Mammary epithelial cell (primary cell): ENCODE measurements at regions of chr2 and their contacts with region 1.

Region 1: GRCh38 chr2:39996653-39997080 is 217.6 kb upstream of the THUMPD2 start:
- DNase-seq: peak; percentile 96
- H3K4me3 ChIP-seq: no peak overlapping the region
- H3K27ac ChIP-seq: peak overlapping the region; percentile 47
- H3K4me1 ChIP-seq: peaks cover 37% of the 10 kb centered on the region
- H3K27me3 ChIP-seq: no peaks in the 10 kb centered on the region
- CTCF ChIP-seq: no peak

Region 2: DNA sequence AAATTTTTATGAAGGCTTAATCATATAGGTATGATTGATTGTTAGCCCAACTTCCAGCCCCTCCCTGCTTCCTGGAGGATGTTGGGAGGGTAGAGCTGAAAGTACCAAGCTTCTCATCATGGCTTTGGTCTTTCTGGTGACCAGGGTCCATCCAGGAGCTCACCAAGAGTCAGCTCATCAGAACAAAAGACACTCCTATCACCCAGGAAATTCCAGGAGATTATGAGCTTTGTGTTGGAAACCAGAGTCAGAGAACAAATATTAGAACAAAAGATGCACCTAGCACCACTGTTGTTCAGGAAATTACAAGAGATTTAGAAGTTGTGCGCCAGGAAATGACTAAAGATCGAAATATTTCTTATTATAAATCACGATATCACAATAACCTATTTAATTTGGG is 97.7 kb before region 1 on chr2:
- CTCF ChIA-PET with region 1: no interaction called
- dilution Hi-C with region 1: no loop called
- in situ Hi-C with region 1: no loop called
- intact Hi-C with region 1: no loop called
- DNase-seq: no peak
- H3K4me3 ChIP-seq: no peak overlapping the region
- H3K27ac ChIP-seq: no peak overlapping the region
- H3K4me1 ChIP-seq: no peaks in the 10 kb centered on the region
- H3K27me3 ChIP-seq: no peaks in the 10 kb centered on the region
- CTCF ChIP-seq: no peak

Region 3: GRCh38 chr2:39932198-39932597 is 64.5 kb before region 1 on chr2:
- CTCF ChIA-PET with region 1: no interaction called
- dilution Hi-C with region 1: no loop called
- in situ Hi-C with region 1: no loop called
- intact Hi-C with region 1: loop called (anchors 5 kb)
- DNase-seq: peak; percentile 15
- H3K4me3 ChIP-seq: no peak overlapping the region
- H3K27ac ChIP-seq: no peak overlapping the region
- H3K4me1 ChIP-seq: peaks cover 3% of the 10 kb centered on the region
- H3K27me3 ChIP-seq: no peaks in the 10 kb centered on the region
- CTCF ChIP-seq: no peak

Region 4: DNA sequence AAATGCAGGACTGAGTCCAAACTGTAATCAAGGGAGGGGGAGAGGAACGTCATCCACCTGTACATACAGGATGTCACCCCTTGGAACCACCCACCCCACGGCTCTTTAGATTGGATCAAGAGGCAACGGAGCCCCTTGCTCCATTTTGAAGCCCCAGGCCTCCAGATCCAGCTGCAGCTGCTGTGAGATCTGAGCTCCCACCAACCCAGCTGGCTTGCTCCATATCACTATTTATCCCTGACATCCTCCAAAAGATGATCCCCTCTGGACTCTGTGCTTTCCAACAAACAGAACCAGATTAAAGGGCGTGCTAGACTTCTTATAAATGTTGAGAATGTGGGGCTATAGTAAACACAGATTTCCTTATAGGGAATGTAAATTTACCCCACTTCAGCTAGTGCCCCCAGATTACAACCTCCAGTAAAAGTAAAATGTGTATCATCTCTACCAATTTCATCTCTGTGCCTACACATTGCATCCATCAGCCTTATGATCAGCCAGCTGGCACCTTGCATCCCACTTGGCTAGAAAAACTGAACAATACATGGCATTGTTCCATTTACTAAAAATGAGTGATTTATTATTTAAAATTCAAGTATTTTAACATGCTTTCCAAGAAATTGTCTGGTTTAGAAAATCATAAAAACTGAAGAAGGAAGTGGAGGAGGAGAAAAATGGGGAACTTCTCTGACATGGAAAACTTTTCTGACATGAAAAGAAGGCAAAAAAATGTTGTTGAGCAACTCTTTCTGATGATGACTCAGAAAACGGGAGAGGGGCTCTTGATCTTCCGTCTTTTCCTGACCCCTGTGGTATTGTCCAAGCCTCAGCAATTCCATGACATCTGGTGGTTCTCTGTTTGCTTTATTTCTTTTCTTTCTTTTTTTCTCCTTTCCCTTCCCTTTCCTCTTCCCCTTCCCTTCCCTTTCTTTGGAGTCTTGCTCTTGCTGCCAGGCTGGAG is 45.0 kb after region 1 on chr2:
- CTCF ChIA-PET with region 1: no interaction called
- dilution Hi-C with region 1: no loop called
- in situ Hi-C with region 1: no loop called
- intact Hi-C with region 1: no loop called
- DNase-seq: peak; percentile 34
- H3K4me3 ChIP-seq: no peak overlapping the region
- H3K27ac ChIP-seq: no peak overlapping the region
- H3K4me1 ChIP-seq: no peaks in the 10 kb centered on the region
- H3K27me3 ChIP-seq: no peaks in the 10 kb centered on the region
- CTCF ChIP-seq: no peak

Region 5: GRCh38 chr2:40101131-40101575 is 104.5 kb after region 1 on chr2:
- CTCF ChIA-PET with region 1: no interaction called
- dilution Hi-C with region 1: no loop called
- in situ Hi-C with region 1: no loop called
- intact Hi-C with region 1: loop called (anchors 5 kb)
- DNase-seq: no peak
- H3K4me3 ChIP-seq: no peak overlapping the region
- H3K27ac ChIP-seq: no peak overlapping the region
- H3K4me1 ChIP-seq: peaks cover 51% of the 10 kb centered on the region
- H3K27me3 ChIP-seq: no peaks in the 10 kb centered on the region
- CTCF ChIP-seq: no peak